Activated naive CD4-positive, alpha-beta T cell treated with anti-CD3 and anti-CD28 coated beads for 36 hours (primary cell): ENCODE measurements at regions of chr18 and their contacts with region 1.

Region 1: DNA sequence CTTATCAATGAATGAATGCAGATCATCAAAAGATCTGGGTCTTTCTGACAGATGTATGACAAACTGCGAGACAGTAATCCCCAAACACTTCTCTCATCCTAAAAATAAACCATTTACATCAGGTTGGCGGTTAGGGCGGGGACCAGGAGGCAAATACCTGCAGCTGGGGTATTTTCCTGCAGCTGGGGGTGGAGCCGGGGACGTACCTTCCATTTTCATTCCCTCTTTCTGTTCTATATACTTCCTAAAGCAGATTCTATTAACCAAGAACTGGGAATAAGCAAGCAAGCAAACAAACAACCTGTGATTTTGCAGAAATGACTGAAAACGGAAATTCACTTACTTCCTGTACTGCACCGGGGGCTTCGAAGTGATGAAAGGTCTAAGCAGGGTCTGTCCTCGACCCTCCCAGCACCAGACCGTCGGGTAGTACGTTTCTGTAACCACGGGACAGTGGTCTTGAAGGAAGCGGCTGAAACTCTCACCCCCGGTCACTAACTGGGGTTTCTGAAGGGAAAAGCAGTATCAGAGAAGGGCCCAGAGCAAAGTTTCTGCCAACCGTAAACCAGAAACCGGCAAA is 1.2 kb downstream of the ABHD3 start:
- DNase-seq: peak; percentile 80
- H3K4me3 Mint-ChIP-seq: peak overlapping the region; percentile 91
- H3K27ac Mint-ChIP-seq: peak overlapping the region; percentile 91
- H3K4me1 Mint-ChIP-seq: peaks cover 21% of the 10 kb centered on the region
- H3K27me3 Mint-ChIP-seq: no peaks in the 10 kb centered on the region

Region 2: DNA sequence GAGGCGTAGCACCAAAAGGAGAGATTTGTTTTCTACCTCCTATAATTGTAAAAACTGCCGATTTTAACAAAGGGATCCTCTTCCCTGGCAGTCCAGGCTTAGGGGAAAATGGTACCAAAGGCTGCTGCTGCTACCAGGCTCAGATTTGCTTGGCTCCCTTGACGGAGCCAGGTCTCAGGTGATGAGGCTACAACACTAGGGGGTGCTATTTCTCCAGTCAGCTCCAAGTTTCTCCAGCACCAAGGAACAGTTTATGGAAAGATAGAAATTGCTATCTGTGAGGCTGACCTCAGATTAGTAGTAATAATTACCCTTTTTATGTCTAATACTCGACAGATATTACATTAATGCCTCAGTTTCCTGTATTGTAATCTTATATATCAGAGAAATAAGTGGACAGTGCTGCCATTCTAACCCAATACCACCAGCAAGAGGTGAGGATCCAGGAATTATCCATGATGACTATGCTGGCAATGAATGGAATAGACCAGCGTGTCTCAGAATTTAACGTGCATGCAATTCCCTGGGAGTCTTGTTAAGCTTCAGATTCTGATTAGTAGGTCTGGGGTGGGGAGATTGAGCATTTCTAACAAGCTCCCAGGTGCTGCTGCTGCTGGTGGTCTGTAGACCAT is 214.1 kb before region 1 on chr18:
- CTCF ChIA-PET with region 1: no interaction called
- intact Hi-C with region 1: no loop called
- DNase-seq: peak; percentile 52
- H3K4me3 Mint-ChIP-seq: no peak overlapping the region
- H3K27ac Mint-ChIP-seq: no peak overlapping the region
- H3K4me1 Mint-ChIP-seq: no peaks in the 10 kb centered on the region
- H3K27me3 Mint-ChIP-seq: peaks cover 6% of the 10 kb centered on the region

Region 3: DNA sequence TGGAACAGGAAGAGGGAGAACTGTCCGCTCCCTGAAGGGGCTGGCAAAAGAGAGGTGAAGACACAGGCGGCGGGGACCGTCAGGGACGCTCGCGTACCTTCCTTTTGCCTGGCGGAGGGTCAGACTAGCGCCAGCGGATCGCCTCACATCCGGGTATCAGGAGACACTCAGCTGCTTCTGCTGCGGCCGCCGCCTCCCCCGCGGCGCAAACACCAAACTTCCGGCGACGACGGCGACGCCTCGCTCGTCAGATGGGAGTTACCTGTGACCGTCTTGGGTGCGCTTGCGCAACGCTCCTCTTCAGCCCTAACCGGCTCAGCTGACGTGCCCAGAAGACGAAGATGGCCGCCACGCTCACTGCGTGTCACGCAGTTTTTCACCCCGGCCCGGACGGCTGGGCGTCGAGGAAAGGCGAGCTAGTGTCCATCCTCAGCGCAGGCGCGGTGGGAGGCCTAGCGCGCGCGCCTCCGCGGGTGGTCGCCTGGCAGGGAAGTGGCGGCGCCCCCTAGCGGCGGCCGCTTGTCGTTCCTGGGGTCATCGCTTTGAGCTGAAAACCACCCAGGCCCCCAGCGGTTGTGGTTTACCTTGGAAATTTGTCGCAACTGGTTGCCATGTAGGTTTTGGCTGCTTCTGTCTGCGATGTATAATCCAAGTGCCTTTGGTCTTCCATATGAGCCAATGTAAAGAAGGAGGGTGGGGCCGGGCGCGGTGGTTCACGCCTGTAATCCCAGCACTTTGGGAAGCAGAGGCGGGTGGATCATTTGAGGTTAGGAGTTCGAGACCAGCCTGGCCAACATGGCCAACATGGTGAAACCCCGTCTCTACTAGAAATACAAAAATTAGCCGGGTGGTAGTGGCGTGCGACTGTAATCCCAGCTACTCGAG is 102.6 kb before region 1 on chr18 and contains the start of gene ESCO1:
- CTCF ChIA-PET with region 1: interaction called, 6 read pairs
- intact Hi-C with region 1: loop called (anchors 1 kb)
- DNase-seq: peak; percentile 95
- H3K4me3 Mint-ChIP-seq: peak within 1 kb of the TSS; percentile 92
- H3K27ac Mint-ChIP-seq: peak within 1 kb of the TSS; percentile 96
- H3K4me1 Mint-ChIP-seq: peaks cover 26% of the 10 kb centered on the region
- H3K27me3 Mint-ChIP-seq: no peaks in the 10 kb centered on the region
- total RNA-seq, gene ESCO1: 14.3 to 16.7 TPM

Region 4: DNA sequence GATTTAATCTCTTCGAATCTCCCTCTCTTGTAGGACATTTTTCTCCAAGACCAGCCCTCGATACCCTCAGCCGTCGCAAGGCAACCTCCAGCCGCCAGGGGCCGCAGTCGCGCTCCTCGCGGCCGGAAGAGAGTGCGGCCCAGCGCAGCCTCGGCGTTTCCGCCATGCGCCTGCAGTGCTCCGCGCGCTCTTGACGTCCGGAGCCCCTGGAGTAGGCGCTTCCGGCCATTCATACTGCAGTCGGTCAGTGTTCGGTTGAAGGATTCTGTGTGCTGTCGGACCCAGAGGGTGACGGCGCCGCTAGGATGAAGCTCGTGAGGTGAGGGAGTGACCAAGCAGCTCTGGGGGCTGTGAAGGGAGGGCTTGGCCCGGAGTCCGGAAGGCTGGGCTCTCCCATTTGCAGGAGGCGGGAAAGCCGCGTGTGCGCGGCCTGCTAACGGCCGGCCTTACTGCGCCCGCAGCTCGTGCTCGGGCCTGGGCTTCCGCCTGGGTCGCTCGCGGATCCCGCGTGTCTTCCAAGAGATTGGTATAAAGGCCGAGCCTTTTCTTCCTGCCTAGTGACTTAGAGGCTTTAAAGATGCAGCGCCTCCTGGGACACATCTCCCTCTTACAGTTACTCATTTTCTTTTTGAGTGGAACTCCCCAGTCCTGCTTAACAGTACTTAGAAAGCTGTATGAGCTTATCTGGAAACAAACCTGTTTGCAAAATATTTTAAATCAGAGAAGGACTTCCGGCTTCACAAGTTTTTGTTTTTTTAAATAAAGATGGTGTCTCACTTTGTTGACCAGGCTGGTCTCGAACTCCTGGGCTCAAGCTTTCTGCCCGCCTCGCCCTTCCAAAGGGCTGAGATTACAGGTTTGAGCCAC is 91.0 kb before region 1 on chr18 and contains the start of gene SNRPD1:
- CTCF ChIA-PET with region 1: no interaction called
- intact Hi-C with region 1: loop called (anchors 1 kb)
- DNase-seq: peak; percentile 89
- H3K4me3 Mint-ChIP-seq: peak within 1 kb of the TSS; percentile 96
- H3K27ac Mint-ChIP-seq: peak within 1 kb of the TSS; percentile 97
- H3K4me1 Mint-ChIP-seq: peaks cover 35% of the 10 kb centered on the region
- H3K27me3 Mint-ChIP-seq: no peaks in the 10 kb centered on the region
- total RNA-seq, gene SNRPD1: 133 to 144 TPM

Region 5: DNA sequence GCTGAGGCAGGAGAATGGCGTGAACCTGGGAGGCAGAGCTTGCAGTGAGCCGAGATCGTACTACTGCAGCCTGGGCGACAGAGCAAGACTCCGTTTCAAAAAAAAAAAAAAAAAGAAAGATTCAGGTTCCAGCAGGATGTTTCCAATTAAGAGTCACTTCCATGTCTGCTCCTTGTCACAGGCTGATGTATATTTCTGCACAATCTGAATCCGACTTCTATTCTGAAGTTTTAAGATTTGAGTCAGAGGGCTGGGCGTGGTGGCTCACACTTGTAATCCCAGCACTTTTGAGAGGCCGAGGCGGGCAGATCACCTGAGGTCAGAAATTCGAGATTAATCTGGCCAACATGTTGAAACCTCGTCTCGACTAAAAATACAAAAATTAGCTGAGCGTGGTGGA is 66.6 kb before region 1 on chr18:
- CTCF ChIA-PET with region 1: interaction called, 3 read pairs
- intact Hi-C with region 1: loop called (anchors 1 kb)
- DNase-seq: no peak
- H3K4me3 Mint-ChIP-seq: no peak overlapping the region
- H3K27ac Mint-ChIP-seq: no peak overlapping the region
- H3K4me1 Mint-ChIP-seq: peaks cover 12% of the 10 kb centered on the region
- H3K27me3 Mint-ChIP-seq: no peaks in the 10 kb centered on the region

Region 6: GRCh38 chr18:21682371-21683051 is 20.8 kb before region 1 on chr18:
- CTCF ChIA-PET with region 1: interaction called, 3 read pairs
- intact Hi-C with region 1: loop called (anchors 1 kb)
- DNase-seq: peak; percentile 34
- H3K4me3 Mint-ChIP-seq: no peak overlapping the region
- H3K27ac Mint-ChIP-seq: no peak overlapping the region
- H3K4me1 Mint-ChIP-seq: peaks cover 22% of the 10 kb centered on the region
- H3K27me3 Mint-ChIP-seq: no peaks in the 10 kb centered on the region

Region 7: DNA sequence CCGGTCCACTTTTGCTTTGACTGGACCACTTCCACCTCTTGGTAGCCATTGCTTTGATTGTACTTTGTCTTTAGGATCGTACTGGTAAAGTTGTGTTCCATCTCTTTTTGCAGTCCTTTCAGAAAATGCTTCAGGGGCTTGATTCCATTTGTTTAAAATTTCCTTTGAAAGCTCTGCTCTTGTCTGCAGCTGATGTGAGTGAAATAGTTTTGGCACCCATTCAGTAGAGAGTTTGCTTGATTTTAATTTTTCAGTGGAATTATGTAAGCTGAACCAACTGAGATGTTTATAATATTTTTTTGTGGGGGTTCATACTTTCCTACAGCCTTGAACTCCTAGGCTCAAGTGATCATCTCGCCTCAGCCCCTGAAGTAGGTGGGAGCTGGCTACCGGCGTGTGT is 29.7 kb after region 1 on chr18:
- CTCF ChIA-PET with region 1: no interaction called
- intact Hi-C with region 1: no loop called
- DNase-seq: no peak
- H3K4me3 Mint-ChIP-seq: no peak overlapping the region
- H3K27ac Mint-ChIP-seq: no peak overlapping the region
- H3K4me1 Mint-ChIP-seq: no peaks in the 10 kb centered on the region
- H3K27me3 Mint-ChIP-seq: peaks cover 2% of the 10 kb centered on the region

Region 8: DNA sequence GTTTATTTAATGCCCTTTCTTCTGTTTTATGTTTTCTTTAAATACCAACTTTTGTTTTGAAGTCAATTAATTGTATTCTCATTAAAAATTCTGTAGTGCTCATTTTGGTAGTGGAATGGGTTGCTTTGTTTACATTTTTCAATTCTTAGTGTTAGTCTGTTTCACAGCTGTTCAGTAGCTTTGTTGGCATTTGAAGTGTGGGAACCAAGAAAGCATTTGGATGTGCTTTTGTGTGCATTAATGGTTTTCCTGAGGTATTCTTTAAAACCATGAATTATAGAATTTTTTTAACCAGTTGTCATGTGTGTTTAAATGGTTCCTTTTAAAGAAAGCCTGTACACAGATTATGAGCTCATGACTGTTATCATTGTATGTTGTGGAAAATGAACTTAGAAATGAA is 57.0 kb after region 1 on chr18:
- CTCF ChIA-PET with region 1: no interaction called
- intact Hi-C with region 1: no loop called
- DNase-seq: no peak
- H3K4me3 Mint-ChIP-seq: no peak overlapping the region
- H3K27ac Mint-ChIP-seq: no peak overlapping the region
- H3K4me1 Mint-ChIP-seq: peaks cover 8% of the 10 kb centered on the region
- H3K27me3 Mint-ChIP-seq: no peaks in the 10 kb centered on the region

Region 9: GRCh38 chr18:22074282-22075069 is 371.1 kb after region 1 on chr18:
- CTCF ChIA-PET with region 1: no interaction called
- intact Hi-C with region 1: no loop called
- DNase-seq: no peak
- H3K4me3 Mint-ChIP-seq: no peak overlapping the region
- H3K27ac Mint-ChIP-seq: no peak overlapping the region
- H3K4me1 Mint-ChIP-seq: no peaks in the 10 kb centered on the region
- H3K27me3 Mint-ChIP-seq: no peaks in the 10 kb centered on the region